ENCODE measurements at regions of chr19 and their contacts with region 1.

Region 1: DNA sequence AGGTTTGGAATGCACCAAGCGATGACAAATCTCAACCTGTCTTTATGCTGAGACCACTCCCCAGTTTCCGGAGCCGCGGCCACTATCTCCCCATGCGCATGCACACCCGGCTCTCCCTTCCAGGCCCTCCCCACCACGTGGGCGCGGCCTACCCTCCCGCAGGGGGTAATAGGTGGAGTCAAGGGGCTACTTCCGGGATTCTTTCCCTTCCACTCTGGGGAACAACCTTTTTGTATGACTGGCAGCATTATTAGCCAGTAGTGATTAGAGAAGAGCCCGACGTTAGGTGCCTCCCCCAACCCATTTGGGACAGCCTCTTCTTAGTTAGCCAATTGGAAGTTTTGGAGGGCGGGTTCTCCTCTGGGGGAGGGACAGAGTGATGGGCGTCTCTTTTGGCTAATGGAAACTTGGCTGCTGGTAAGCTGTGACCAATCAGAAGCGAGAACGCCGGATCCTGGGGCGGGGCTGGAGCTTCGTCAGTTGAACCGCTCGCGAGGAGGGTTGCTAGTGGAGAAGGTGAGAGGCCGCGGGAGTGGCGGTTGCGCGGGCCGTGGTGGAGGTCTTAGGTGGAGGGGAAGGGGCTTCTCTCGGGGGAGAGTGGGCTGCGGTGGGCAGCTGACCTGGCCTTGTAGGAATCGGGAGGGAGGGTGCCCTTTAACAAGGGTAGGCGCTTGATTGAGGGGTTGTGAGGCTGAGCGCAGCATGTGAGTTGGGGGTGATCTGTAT is at the start of gene CCDC61:
- DNase-seq: peak; percentile 82 to 100 (median 99)
- ATAC-seq: peak; percentile 97
- H3K4me3 ChIP-seq: peak within 1 kb of the TSS; percentile 73
- H3K4me3 Mint-ChIP-seq: peak within 1 kb of the TSS in 3 of 10 donors; percentile 9 to 64 (median 34)
- H3K27ac ChIP-seq: peak within 1 kb of the TSS; percentile 84
- H3K27ac Mint-ChIP-seq: peak within 1 kb of the TSS in 1 of 9 donors; percentile 72
- H3K4me1 ChIP-seq: peaks cover 5% of the 10 kb centered on the region in 2 donors
- H3K4me1 Mint-ChIP-seq: peaks cover 12 to 25% (median 18%) of the 10 kb centered on the region in 7 donors
- H3K27me3 ChIP-seq: no peaks in the 10 kb centered on the region
- H3K27me3 Mint-ChIP-seq: peaks cover 0 to 13% (median 5%) of the 10 kb centered on the region in 5 donors
- total RNA-seq, gene CCDC61: 15.5 to 35.8 (median 25.3) TPM

Region 2: DNA sequence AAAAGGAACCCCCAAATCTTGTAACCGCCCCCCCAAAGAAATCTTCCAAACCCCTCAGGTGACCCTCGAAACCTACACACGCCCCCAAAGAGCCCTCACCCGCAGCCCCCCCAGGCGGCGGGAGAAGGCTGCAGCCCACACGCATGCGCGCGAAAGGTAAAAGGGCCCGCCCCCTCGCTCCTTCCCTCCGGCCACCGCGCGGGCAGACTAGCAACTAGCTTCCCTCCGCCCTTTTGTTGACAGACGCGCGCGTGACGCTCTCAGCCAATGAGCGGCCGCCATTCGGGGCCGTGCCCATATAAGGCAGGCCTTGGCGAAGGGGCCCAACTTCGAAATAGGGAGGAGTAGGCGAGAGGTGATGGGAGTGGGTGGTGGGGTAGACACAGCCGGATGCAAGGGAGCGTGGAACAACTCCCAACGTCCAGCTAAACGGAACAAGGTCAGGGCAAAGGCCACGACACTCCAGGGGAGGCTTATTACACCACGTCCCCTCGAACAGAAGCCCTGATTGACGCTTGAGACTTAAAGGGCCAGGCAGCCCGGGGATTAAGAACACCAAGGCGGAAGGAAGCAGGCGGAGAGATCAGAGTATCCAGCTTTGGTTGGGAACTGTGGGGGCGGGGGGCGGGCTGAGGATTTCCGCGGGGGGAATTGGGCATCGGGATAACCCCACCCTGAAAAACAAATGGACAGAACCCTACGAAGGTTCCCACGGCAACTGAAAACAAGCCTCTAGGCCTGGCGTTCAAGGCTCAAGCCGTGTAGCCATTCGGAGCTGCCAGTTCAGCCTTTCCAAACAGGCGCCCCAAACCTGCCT is 277.8 kb before region 1 on chr19:
- CTCF ChIA-PET with region 1: no interaction called
- POLR2A ChIA-PET with region 1: no interaction called
- intact Hi-C with region 1: loop called (anchors 1 kb)
- DNase-seq: peak; percentile 92 to 99 (median 98)
- ATAC-seq: peak; percentile 98
- H3K4me3 ChIP-seq: peak overlapping the region; percentile 80
- H3K4me3 Mint-ChIP-seq: peak overlapping the region; percentile 89 to 99 (median 95)
- H3K27ac ChIP-seq: peak overlapping the region; percentile 89
- H3K27ac Mint-ChIP-seq: peak overlapping the region; percentile 88 to 97 (median 96)
- H3K4me1 ChIP-seq: peaks cover 17 to 26% of the 10 kb centered on the region in 2 donors
- H3K4me1 Mint-ChIP-seq: peaks cover 26 to 55% (median 38%) of the 10 kb centered on the region in 7 donors
- H3K27me3 ChIP-seq: no peaks in the 10 kb centered on the region
- H3K27me3 Mint-ChIP-seq: no peaks in the 10 kb centered on the region

Region 3: GRCh38 chr19:45792470-45793177 is 202.5 kb before region 1 on chr19 and contains the start of gene DMWD:
- CTCF ChIA-PET with region 1: no interaction called
- POLR2A ChIA-PET with region 1: no interaction called
- intact Hi-C with region 1: loop called (anchors 1 to 10 kb)
- DNase-seq: peak; percentile 95 to 99 (median 98)
- ATAC-seq: peak; percentile 98
- H3K4me3 ChIP-seq: peak within 1 kb of the TSS; percentile 61
- H3K4me3 Mint-ChIP-seq: peak within 1 kb of the TSS; percentile 84 to 93 (median 88)
- H3K27ac ChIP-seq: peak within 1 kb of the TSS; percentile 15
- H3K27ac Mint-ChIP-seq: peak within 1 kb of the TSS; percentile 45 to 93 (median 85)
- H3K4me1 ChIP-seq: peaks cover 25 to 28% of the 10 kb centered on the region in 2 donors
- H3K4me1 Mint-ChIP-seq: peaks cover 31 to 44% (median 41%) of the 10 kb centered on the region in 7 donors
- H3K27me3 ChIP-seq: peaks cover 0 to 8% of the 10 kb centered on the region in 2 donors
- H3K27me3 Mint-ChIP-seq: peaks cover 6 to 76% (median 37%) of the 10 kb centered on the region in 5 donors
- total RNA-seq, gene DMWD: 18.7 to 43.2 (median 35.4) TPM

Region 4: DNA sequence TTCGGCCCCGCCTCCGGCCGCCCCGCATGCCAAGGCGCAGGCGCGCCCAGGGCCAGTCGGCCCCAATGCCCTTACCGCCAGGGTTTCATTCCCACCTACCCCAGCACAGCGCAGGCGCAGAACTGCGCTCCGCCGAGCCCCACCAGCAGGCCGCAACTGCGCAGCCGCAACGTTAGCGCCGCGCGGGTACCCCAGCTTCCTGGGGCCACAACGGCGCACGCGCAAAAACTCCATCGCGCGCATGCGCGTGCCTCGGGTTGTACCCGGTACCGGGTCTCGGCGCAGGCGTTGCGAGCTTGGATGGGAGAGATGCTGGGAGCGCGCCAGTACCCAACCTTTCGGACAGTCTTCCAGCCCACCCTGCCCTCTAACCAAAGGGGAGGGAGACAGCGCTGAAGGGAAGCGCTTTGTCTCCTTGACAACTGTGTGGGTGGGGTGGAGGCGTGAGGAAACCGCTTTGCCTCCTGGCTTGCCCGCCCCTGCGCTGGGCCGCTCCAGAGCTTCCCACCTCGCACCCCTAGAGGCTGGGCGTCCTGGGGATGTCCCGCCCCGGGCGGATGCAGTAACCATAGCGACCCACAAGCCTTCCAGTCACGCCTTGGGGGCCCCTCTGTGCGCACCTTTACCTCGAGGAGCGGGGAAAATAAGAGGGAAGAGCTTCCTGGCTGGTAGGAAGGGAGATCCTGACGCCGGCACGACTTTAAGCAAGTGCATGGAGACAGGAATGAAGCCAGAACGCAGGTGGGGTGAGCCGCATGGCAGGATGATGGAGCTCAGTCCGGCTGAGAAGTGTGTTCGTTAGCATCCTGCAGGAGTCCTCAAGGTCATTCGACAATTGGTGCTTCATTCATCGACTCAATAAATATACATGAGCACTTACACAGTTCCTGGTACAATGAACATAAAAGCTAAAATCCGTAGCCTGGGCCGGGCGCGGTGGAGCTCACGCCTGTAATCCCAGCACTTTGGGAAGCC is 92.2 kb before region 1 on chr19:
- CTCF ChIA-PET with region 1: no interaction called
- POLR2A ChIA-PET with region 1: interaction called, 6 read pairs
- intact Hi-C with region 1: loop called (anchors 1 kb)
- DNase-seq: peak; percentile 96 to 100 (median 99)
- ATAC-seq: peak; percentile 93
- H3K4me3 ChIP-seq: peak overlapping the region; percentile 93
- H3K4me3 Mint-ChIP-seq: peak overlapping the region; percentile 93 to 98 (median 96)
- H3K27ac ChIP-seq: peak overlapping the region; percentile 78
- H3K27ac Mint-ChIP-seq: peak overlapping the region; percentile 71 to 93 (median 87)
- H3K4me1 ChIP-seq: peaks cover 0 to 5% of the 10 kb centered on the region in 2 donors
- H3K4me1 Mint-ChIP-seq: peaks cover 10 to 27% (median 17%) of the 10 kb centered on the region in 7 donors
- H3K27me3 ChIP-seq: no peaks in the 10 kb centered on the region
- H3K27me3 Mint-ChIP-seq: peaks cover 0 to 17% (median 0%) of the 10 kb centered on the region in 5 donors

Region 5: GRCh38 chr19:45927565-45928261 is 67.4 kb before region 1 on chr19:
- CTCF ChIA-PET with region 1: no interaction called
- POLR2A ChIA-PET with region 1: interaction called, 7 read pairs
- intact Hi-C with region 1: loop called (anchors 2 kb)
- DNase-seq: peak; percentile 66 to 89 (median 87)
- ATAC-seq: peak; percentile 99
- H3K4me3 ChIP-seq: no peak overlapping the region
- H3K4me3 Mint-ChIP-seq: peak overlapping the region in 7 of 10 donors; percentile 10 to 86 (median 55)
- H3K27ac ChIP-seq: no peak overlapping the region
- H3K27ac Mint-ChIP-seq: peak overlapping the region in 4 of 9 donors; percentile 28 to 60 (median 42)
- H3K4me1 ChIP-seq: peaks cover 4 to 5% of the 10 kb centered on the region in 2 donors
- H3K4me1 Mint-ChIP-seq: peaks cover 4 to 23% (median 6%) of the 10 kb centered on the region in 7 donors
- H3K27me3 ChIP-seq: no peaks in the 10 kb centered on the region
- H3K27me3 Mint-ChIP-seq: peaks cover 0 to 15% (median 9%) of the 10 kb centered on the region in 5 donors

Region 6: GRCh38 chr19:46009530-46010510 is 14.7 kb after region 1 on chr19:
- CTCF ChIA-PET with region 1: interaction called, 3 read pairs
- POLR2A ChIA-PET with region 1: no interaction called
- intact Hi-C with region 1: loop called in 1 of 2 experiments (anchors 2 kb)
- DNase-seq: peak; percentile 25 to 68 (median 54)
- ATAC-seq: peak; percentile 85
- H3K4me3 ChIP-seq: no peak overlapping the region
- H3K4me3 Mint-ChIP-seq: peak overlapping the region in 1 of 10 donors; percentile 77
- H3K27ac ChIP-seq: no peak overlapping the region
- H3K27ac Mint-ChIP-seq: peak overlapping the region in 2 of 9 donors; percentile 45 to 71
- H3K4me1 ChIP-seq: no peaks in the 10 kb centered on the region
- H3K4me1 Mint-ChIP-seq: peaks cover 6 to 10% (median 6%) of the 10 kb centered on the region in 7 donors
- H3K27me3 ChIP-seq: peaks cover 0 to 6% of the 10 kb centered on the region in 2 donors
- H3K27me3 Mint-ChIP-seq: peaks cover 5 to 9% (median 6%) of the 10 kb centered on the region in 5 donors

Region 7: GRCh38 chr19:46049597-46049996 is 54.4 kb after region 1 on chr19:
- CTCF ChIA-PET with region 1: no interaction called
- POLR2A ChIA-PET with region 1: no interaction called
- intact Hi-C with region 1: no loop called
- DNase-seq: no peak
- ATAC-seq: no peak
- H3K4me3 ChIP-seq: no peak overlapping the region
- H3K4me3 Mint-ChIP-seq: no peak overlapping the region
- H3K27ac ChIP-seq: no peak overlapping the region
- H3K27ac Mint-ChIP-seq: no peak overlapping the region
- H3K4me1 ChIP-seq: no peaks in the 10 kb centered on the region
- H3K4me1 Mint-ChIP-seq: no peaks in the 10 kb centered on the region
- H3K27me3 ChIP-seq: peaks cover 0 to 3% of the 10 kb centered on the region in 2 donors
- H3K27me3 Mint-ChIP-seq: peaks cover 71 to 83% (median 78%) of the 10 kb centered on the region in 5 donors

Region 8: GRCh38 chr19:47256688-47257443 is 1261.7 kb after region 1 on chr19:
- CTCF ChIA-PET with region 1: no interaction called
- POLR2A ChIA-PET with region 1: no interaction called
- intact Hi-C with region 1: loop called in 1 of 2 experiments (anchors 5 kb)
- DNase-seq: peak; percentile 94 to 100 (median 96)
- ATAC-seq: peak; percentile 88
- H3K4me3 ChIP-seq: peak overlapping the region; percentile 65
- H3K4me3 Mint-ChIP-seq: peak overlapping the region; percentile 85 to 97 (median 90)
- H3K27ac ChIP-seq: peak overlapping the region; percentile 90
- H3K27ac Mint-ChIP-seq: peak overlapping the region; percentile 90 to 99 (median 97)
- H3K4me1 ChIP-seq: peaks cover 15 to 24% of the 10 kb centered on the region in 2 donors
- H3K4me1 Mint-ChIP-seq: peaks cover 35 to 46% (median 39%) of the 10 kb centered on the region in 7 donors
- H3K27me3 ChIP-seq: no peaks in the 10 kb centered on the region
- H3K27me3 Mint-ChIP-seq: peaks cover 0 to 2% (median 0%) of the 10 kb centered on the region in 5 donors